Right cardiac atrium (tissue), 5 donors: ENCODE measurements at regions of chr15 and their contacts with region 1.

Region 1: DNA sequence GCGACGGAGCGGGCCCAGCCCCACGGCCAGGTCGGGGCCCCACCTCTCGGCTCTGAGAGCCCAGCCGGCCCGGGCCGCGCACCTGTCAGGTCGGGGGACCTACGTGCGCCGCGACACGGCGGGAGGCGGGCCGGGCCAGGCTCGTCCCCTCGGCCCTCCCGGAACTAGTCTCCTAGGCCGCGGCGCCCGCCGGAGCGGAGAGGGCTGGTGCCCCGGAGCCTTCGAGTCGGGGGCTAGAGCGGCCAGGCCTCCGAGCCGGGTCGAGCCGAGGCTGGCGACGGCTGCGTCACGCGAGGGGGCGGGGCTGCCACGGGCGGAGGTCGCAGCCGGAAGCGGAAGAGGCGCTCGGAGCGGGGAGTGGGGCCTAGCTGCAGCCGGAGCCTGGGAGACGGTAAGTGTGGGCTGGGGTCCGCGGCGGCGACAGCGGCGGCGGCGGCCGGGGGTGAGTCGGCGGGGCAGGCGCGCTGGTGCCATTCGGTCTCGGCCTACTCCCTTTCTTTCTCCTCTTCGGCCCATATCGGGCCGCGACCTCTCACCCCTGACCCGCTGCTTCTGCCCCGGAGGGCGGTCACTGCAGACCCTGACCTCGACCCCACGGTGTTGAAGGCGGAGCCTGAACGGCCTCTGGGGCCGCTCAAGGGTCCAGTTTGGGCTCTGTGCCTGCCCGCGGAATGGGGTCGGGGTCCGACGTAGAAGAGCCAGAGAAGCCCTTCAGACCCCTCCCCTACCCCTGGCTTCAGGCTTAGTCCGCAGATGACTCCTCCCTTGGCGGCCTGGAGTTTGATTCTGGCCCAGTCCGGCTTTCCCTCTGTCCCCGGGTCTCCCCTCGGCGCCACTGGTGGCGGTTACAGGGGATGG is at the start of gene CLK3:
- DNase-seq: peak; percentile 97 to 99 (median 99)
- ATAC-seq: peak; percentile 89 to 90
- H3K4me3 ChIP-seq: peak within 1 kb of the TSS; percentile 89
- H3K27ac ChIP-seq: peak within 1 kb of the TSS; percentile 93
- H3K4me1 ChIP-seq: peaks cover 4% of the 10 kb centered on the region
- H3K27me3 ChIP-seq: no peaks in the 10 kb centered on the region
- total RNA-seq, gene CLK3: 40.0 to 65.1 (median 53.3) TPM

Region 2: DNA sequence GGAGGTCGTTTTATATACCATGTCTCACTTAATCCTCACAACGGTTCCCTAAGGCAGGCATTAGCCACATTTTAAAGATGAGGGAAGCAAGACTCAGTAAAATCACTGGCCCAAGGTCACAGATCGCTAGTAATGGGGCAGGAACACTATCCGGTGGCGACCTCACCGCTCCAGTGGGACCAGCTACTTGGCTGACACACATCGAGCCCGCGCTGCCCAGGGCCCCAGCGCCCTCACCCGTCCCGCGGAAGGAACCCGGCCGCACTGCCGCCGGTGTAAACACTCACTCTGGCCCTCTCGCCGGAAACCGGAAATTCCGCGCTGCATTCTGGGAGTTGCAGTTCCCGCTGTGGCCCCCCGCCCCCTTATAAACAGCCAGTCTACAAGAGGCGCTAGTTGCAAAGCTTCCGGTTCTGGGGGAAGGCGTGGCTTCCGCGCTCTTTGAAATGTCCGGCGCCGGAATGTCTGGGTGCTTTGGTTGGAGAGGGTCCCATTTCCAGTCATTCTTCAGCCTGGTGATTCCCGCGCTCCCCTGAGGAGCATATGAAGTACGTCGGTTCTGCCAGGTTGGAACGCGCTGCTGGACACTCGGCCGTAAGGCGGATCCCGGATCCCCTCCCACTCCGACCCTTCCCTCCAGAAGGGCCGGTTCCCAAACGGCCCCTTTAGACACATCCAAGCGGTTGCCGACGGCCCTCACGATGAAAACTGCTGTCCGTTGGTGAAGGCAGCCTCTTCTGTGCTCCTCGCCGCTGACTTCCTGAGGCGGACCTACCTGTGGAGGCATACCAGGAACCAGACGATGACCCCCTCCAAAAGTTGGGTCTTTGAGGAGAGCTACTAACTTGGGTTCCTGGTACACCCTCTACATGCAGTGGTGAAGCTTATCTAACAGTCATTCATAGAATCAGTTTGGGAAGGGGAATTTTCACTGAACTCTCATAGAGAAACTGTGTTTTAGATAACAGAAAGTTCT is 154.6 kb before region 1 on chr15 and contains the start of gene UBL7:
- intact Hi-C with region 1: loop called in 1 of 4 experiments (anchors 10 kb)
- DNase-seq: peak; percentile 97 to 99 (median 98)
- ATAC-seq: peak; percentile 99 to 100
- H3K4me3 ChIP-seq: peak within 1 kb of the TSS; percentile 90
- H3K27ac ChIP-seq: peak within 1 kb of the TSS; percentile 83
- H3K4me1 ChIP-seq: peaks cover 2% of the 10 kb centered on the region
- H3K27me3 ChIP-seq: no peaks in the 10 kb centered on the region
- total RNA-seq, gene UBL7: 35.8 to 59.3 (median 49.8) TPM

Region 3: DNA sequence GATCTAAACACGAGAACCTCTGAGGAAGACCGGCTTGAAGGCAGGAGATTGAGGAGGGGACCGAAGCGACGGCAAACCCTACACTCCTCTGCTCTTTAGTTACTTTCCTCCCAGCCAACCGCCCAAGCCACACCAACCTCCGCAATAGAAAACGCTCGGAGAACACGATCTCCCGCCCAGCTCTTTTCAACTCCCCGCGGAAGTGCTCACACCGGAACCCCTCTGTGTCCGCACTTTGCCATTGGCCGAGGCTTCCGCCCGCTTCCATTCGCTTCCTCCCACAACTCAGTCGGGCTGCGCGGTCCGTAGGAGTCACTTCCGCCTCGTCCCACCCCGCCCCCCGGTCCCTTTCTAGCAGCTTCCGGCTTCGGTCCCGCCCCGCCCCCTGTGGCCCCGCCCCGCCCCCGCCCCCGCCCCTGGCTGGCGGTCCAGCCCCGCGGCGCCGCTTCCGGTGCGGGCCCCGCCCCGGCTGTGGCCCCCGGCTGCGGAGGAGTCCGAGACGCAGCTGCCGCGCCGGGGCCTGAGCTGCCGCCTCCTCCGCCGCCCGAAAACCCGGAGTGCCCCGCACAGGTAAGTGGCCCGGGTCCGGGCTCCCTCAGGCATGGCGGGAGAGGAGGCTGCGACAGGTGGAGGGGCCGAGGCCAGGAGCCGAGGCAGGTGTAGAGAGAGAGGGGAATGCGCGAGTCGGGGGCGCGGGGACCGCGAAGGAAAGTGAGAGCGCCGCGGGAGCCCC is 74.8 kb before region 1 on chr15 and contains the start of gene ARID3B:
- intact Hi-C with region 1: loop called in 3 of 4 experiments (anchors 5 to 10 kb)
- DNase-seq: peak; percentile 98 to 99 (median 99)
- ATAC-seq: peak; percentile 99
- H3K4me3 ChIP-seq: peak within 1 kb of the TSS; percentile 98
- H3K27ac ChIP-seq: peak within 1 kb of the TSS; percentile 66
- H3K4me1 ChIP-seq: peaks cover 8% of the 10 kb centered on the region
- H3K27me3 ChIP-seq: no peaks in the 10 kb centered on the region
- total RNA-seq, gene ARID3B: 2.1 to 3.8 (median 2.5) TPM

Region 4: GRCh38 chr15:74545880-74546656 is 69.7 kb before region 1 on chr15:
- intact Hi-C with region 1: loop called in 3 of 4 experiments (anchors 5 to 10 kb)
- DNase-seq: peak; percentile 99
- ATAC-seq: peak; percentile 93 to 96
- H3K4me3 ChIP-seq: no peak overlapping the region
- H3K27ac ChIP-seq: no peak overlapping the region
- H3K4me1 ChIP-seq: peaks cover 9% of the 10 kb centered on the region
- H3K27me3 ChIP-seq: no peaks in the 10 kb centered on the region